HCT116 (cell line): ENCODE measurements at regions of chr11 and their contacts with region 1.

Region 1: GRCh38 chr11:1060824-1061616 is 13.7 kb upstream of the MUC2 start:
- DNase-seq: peak; percentile 74
- ATAC-seq: peak; percentile 92
- H3K4me3 ChIP-seq: peak overlapping the region in 1 of 2 experiments; percentile 31; a peak in 2 of 4 replicates
- H3K27ac ChIP-seq: peak overlapping the region; percentile 74
- H3K4me1 ChIP-seq: peaks cover 13 to 31% of the 10 kb centered on the region in 2 experiments
- H3K27me3 ChIP-seq: no peaks in the 10 kb centered on the region
- CTCF ChIP-seq: no peak
- POLR2A ChIP-seq: no peak
- RAD21 ChIP-seq: no peak

Region 2: DNA sequence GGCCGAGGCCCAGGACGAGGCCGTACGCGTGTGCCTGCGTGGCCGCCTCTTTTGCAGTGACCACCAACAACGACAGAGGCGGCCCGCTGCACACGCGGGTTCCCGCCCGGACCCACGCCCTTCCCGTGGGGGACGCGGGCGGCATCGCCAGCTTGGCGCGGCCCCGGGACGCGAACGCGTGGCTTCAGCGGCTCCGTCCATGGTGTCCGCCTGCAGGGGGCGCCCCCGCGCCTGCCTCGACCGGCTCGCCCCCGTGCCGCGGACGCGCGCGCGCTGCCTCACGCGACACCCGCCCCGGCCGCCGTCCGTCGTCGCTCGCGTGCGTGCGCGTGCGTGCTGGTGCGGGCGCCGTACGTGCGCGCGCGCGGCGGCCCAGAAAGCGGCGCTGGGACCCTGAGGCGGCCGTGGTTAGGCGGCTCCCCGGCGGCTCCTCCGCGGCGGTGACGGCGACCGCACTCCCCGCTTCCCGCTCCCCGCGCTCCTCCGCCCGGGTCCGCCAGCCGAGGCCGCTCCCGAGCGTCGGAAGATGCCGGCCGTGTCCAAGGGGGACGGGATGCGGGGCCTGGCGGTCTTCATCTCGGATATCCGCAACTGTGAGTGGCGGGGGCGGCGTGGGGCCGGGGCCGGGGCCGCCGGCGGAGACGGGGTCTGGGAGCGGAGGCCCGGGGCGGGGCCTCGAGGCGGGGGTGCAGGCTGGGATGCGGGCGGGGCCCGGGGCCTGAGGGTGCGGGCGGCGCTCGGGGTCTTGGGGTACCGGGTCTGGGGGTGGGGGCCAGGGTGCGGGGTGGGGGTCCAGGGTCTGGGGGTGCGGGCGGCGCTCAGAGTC is 135.3 kb before region 1 on chr11 and contains the start of gene AP2A2:
- CTCF ChIA-PET with region 1: no interaction called
- POLR2A ChIA-PET with region 1: no interaction called
- RAD21 ChIA-PET with region 1: no interaction called
- intact Hi-C with region 1: loop called (anchors 5 kb)
- DNase-seq: peak; percentile 62
- ATAC-seq: peak; percentile 78
- H3K4me3 ChIP-seq: peak within 1 kb of the TSS; percentile 83 to 88
- H3K27ac ChIP-seq: peak within 1 kb of the TSS; percentile 77
- H3K4me1 ChIP-seq: peaks cover 0 to 29% of the 10 kb centered on the region in 2 experiments; a peak in 2 of 4 replicates
- H3K27me3 ChIP-seq: no peaks in the 10 kb centered on the region
- CTCF ChIP-seq: peak in 2 of 3 experiments; percentile 47 to 61; a peak in 4 of 6 replicates
- POLR2A ChIP-seq: no peak
- RAD21 ChIP-seq: no peak; the same call in 1 of the 2 replicates
- total RNA-seq, gene AP2A2: 55.5 TPM

Region 3: GRCh38 chr11:1252371-1253102 is 191.5 kb after region 1 on chr11:
- CTCF ChIA-PET with region 1: no interaction called
- POLR2A ChIA-PET with region 1: no interaction called
- RAD21 ChIA-PET with region 1: no interaction called
- intact Hi-C with region 1: no loop called
- DNase-seq: no peak
- ATAC-seq: no peak
- H3K4me3 ChIP-seq: no peak overlapping the region
- H3K27ac ChIP-seq: no peak overlapping the region; the same call in 1 of the 2 replicates
- H3K4me1 ChIP-seq: no peaks in the 10 kb centered on the region; a peak in 1 of 4 replicates
- H3K27me3 ChIP-seq: no peaks in the 10 kb centered on the region
- CTCF ChIP-seq: no peak
- POLR2A ChIP-seq: no peak
- RAD21 ChIP-seq: no peak